MCF 10A (cell line): ENCODE measurements at regions of chr16 and their contacts with region 1.

Region 1: DNA sequence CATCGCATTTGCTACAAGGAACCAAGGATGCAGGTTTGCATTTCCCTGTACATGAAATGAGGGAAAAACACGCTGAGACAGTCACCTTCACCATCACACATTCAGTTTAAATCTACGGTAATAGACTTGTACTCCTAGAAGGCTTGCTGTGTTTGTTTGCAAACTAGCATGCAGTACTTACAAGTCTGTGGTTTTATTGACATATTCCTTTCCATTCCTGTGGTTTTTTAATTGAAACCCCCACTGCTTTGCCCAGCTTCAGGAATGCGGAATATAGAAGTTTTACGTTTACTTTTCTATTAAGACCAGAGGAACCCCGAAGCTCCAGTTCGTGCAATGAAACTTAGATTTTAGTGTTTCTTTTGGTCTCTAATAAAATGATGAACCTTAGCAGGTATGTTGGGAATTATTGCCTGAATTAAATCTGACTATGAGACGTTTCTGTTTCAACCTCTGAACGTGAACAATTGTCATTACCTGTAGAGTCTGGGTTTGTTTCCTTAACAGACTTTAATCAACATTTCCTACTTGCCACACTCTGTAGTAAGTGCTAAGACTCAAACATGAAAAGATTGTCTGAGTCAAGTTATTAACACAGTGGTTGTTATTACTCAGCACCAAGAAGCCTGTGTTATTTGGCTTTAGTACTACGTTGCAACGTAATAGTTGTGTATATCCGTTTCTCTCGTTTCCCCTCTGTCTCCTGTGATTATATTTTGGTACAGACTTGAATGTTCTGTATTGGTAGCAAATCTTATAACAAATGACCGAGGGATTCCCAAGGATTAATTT is 793.3 kb upstream of the GOT2 start:
- DNase-seq: peak; percentile 48
- H3K4me3 Mint-ChIP-seq: peak overlapping the region; percentile 48
- H3K27ac Mint-ChIP-seq: peak overlapping the region; percentile 14
- H3K4me1 Mint-ChIP-seq: peaks cover 7% of the 10 kb centered on the region
- H3K27me3 Mint-ChIP-seq: no peaks in the 10 kb centered on the region
- CTCF ChIP-seq: no peak

Region 2: DNA sequence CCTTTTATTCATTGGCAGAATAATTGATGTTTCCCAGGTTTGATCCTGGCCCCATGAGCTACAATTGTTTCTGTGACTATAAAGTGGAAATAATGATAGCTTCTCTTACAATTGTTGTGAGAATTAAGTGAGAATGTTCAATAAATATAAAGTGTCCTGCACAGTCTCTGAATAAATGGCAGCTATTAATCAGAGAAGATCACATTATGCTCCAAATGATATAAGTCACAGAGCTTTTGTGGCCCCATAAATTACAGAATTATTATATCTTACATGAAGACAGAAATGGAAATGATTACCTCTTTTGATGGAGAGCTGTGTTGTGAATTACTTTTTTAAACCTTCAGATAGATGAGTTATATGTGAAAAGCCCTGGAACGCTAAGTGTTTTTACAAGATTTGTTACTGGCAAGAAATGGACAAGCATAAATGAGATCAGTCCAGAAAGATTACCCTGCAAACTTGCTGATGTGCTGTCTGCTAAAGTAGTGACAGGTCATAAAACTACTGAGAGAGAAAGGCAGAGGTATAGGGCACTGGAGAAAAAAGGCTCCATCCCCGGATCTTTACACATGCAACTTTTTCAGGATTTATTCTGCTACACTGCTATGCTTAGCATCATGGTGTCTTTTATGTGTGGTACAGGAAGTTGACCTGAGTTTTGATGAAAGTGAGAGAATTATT is 42.4 kb before region 1 on chr16:
- CTCF ChIA-PET with region 1: no interaction called
- POLR2A ChIA-PET with region 1: no interaction called
- intact Hi-C with region 1: no loop called
- DNase-seq: no peak
- H3K4me3 Mint-ChIP-seq: no peak overlapping the region
- H3K27ac Mint-ChIP-seq: no peak overlapping the region
- H3K4me1 Mint-ChIP-seq: no peaks in the 10 kb centered on the region
- H3K27me3 Mint-ChIP-seq: no peaks in the 10 kb centered on the region
- CTCF ChIP-seq: no peak

Region 3: GRCh38 chr16:59635674-59636073 is 108.3 kb after region 1 on chr16:
- CTCF ChIA-PET with region 1: no interaction called
- POLR2A ChIA-PET with region 1: no interaction called
- intact Hi-C with region 1: loop called (anchors 5 kb)
- DNase-seq: no peak
- H3K4me3 Mint-ChIP-seq: no peak overlapping the region
- H3K27ac Mint-ChIP-seq: no peak overlapping the region
- H3K4me1 Mint-ChIP-seq: peaks cover 29% of the 10 kb centered on the region
- H3K27me3 Mint-ChIP-seq: no peaks in the 10 kb centered on the region
- CTCF ChIP-seq: no peak